ENCODE measurements at regions of chr9 and their contacts with region 1.

Region 1: DNA sequence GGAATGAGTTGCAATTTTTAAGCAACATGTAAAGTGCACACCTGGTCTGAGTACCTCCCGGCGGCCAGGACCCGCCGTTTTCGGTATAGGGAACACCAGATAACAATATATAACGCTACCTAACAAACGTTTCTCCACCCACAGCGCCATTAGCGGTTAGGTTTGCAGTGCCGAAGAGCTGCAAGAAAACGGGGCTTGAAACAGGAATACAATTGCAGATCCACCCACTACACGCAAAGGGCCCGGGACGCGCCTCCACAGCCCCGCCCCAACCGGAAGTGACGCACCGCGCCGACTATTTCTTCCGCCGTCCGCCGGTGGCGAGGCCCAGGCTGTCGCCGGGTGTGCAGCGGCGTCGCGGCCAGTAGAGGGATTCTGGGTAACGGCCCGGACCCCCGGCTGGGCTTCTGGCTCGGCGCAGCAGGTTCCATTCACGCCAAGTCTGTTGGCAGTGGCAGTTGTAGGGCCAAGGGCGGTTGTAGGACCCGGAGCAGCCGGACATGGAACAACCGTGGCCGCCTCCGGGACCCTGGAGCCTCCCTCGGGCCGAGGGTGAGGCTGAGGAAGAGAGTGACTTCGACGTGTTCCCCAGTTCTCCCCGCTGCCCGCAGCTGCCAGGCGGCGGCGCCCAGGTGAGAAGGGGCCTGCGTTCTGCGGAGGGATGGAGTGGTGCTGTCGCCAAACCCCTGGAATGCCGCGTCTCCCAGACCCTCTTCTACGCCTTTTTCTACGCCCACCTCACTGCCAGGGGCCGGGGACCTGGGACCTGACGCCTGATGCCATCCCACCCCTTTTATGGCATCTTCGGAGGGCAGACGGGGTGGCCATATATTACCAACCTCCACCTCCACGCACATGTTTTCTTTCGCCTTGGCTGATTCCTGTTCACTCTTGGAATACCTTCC is at the start of gene CDC37L1:
- DNase-seq: peak; percentile 97 to 100 (median 99)
- ATAC-seq: peak; percentile 82
- H3K4me3 ChIP-seq: peak within 1 kb of the TSS; percentile 95
- H3K4me3 Mint-ChIP-seq: no peak within 1 kb of the TSS
- H3K27ac ChIP-seq: peak within 1 kb of the TSS; percentile 95
- H3K27ac Mint-ChIP-seq: no peak within 1 kb of the TSS
- H3K4me1 ChIP-seq: peaks cover 20% of the 10 kb centered on the region
- H3K4me1 Mint-ChIP-seq: peaks cover 17% of the 10 kb centered on the region
- H3K27me3 ChIP-seq: no peaks in the 10 kb centered on the region
- H3K27me3 Mint-ChIP-seq: no peaks in the 10 kb centered on the region
- CTCF ChIP-seq: peak; percentile 74
- total RNA-seq, gene CDC37L1: 49.1 to 53.4 TPM

Region 2: GRCh38 chr9:4596165-4596922 is 83.2 kb before region 1 on chr9:
- CTCF ChIA-PET with region 1: no interaction called
- POLR2A ChIA-PET with region 1: interaction called, 14 read pairs
- intact Hi-C with region 1: loop called in 1 of 2 experiments (anchors 5 kb)
- DNase-seq: peak; percentile 30 to 86 (median 55)
- ATAC-seq: peak; percentile 91
- H3K4me3 ChIP-seq: no peak overlapping the region
- H3K4me3 Mint-ChIP-seq: peak overlapping the region; percentile 62
- H3K27ac ChIP-seq: peak overlapping the region; percentile 25 to 73
- H3K27ac Mint-ChIP-seq: peak overlapping the region; percentile 94
- H3K4me1 ChIP-seq: peaks cover 39% of the 10 kb centered on the region
- H3K4me1 Mint-ChIP-seq: peaks cover 72% of the 10 kb centered on the region
- H3K27me3 ChIP-seq: no peaks in the 10 kb centered on the region
- H3K27me3 Mint-ChIP-seq: no peaks in the 10 kb centered on the region
- CTCF ChIP-seq: peak; percentile 50

Region 3: GRCh38 chr9:4662108-4662988 is 17.2 kb before region 1 on chr9 and contains the start of gene PLPP6:
- CTCF ChIA-PET with region 1: interaction called, 22 read pairs
- POLR2A ChIA-PET with region 1: interaction called, 95 read pairs
- intact Hi-C with region 1: loop called (anchors 1 kb)
- DNase-seq: peak; percentile 48 to 91 (median 69)
- ATAC-seq: peak; percentile 75
- H3K4me3 ChIP-seq: peak within 1 kb of the TSS; percentile 81
- H3K4me3 Mint-ChIP-seq: peak within 1 kb of the TSS; percentile 97
- H3K27ac ChIP-seq: peak within 1 kb of the TSS; percentile 70 to 72
- H3K27ac Mint-ChIP-seq: peak within 1 kb of the TSS; percentile 88
- H3K4me1 ChIP-seq: peaks cover 45% of the 10 kb centered on the region
- H3K4me1 Mint-ChIP-seq: peaks cover 58% of the 10 kb centered on the region
- H3K27me3 ChIP-seq: no peaks in the 10 kb centered on the region
- H3K27me3 Mint-ChIP-seq: no peaks in the 10 kb centered on the region
- CTCF ChIP-seq: peak; percentile 66
- total RNA-seq, gene PLPP6: 8.9 to 10.5 TPM

Region 4: DNA sequence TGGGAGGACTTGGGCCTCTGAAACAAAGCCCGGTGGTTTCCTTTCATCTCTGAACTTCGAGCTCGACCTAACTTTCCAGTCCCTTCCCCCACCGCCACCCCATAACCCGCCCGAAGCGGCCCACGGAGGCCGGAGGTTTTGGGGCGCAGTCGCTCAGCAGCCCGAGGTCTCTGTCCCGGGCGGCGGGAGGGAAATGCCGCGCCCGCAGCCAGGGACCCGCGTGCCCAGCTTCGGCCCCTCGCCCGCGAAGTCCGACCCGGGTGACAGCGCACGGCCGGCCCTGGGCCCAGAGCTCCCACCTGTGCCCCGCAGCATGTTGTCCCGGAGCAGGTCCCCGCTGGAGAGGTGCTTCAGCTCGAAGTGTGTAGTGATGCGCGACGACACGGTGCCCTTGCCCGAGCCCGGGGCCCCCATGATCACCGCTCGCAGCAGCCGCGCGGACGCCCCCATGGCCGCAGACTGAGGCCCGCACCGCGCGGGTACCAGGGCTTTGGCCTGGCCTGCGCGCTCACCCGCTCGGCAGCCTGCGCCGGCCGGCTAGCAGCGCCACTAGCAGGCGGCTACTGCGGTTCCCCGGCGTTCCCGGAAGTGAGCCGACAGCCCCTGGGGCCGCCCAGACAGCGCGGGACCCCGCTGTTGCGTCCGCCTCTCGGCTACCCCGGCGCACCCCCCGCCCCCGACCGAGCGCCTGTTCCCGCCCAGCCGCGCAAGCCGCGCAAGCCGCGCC is 61.3 kb after region 1 on chr9 and contains the start of gene AK3:
- CTCF ChIA-PET with region 1: interaction called, 4 read pairs
- POLR2A ChIA-PET with region 1: interaction called, 30 read pairs
- intact Hi-C with region 1: loop called (anchors 2 to 5 kb)
- DNase-seq: peak; percentile 61 to 94 (median 80)
- ATAC-seq: peak; percentile 92
- H3K4me3 ChIP-seq: peak within 1 kb of the TSS; percentile 86
- H3K4me3 Mint-ChIP-seq: peak within 1 kb of the TSS; percentile 97
- H3K27ac ChIP-seq: peak within 1 kb of the TSS; percentile 57 to 66
- H3K27ac Mint-ChIP-seq: peak within 1 kb of the TSS; percentile 83
- H3K4me1 ChIP-seq: peaks cover 28% of the 10 kb centered on the region
- H3K4me1 Mint-ChIP-seq: peaks cover 36% of the 10 kb centered on the region
- H3K27me3 ChIP-seq: no peaks in the 10 kb centered on the region
- H3K27me3 Mint-ChIP-seq: no peaks in the 10 kb centered on the region
- CTCF ChIP-seq: no peak
- total RNA-seq, gene AK3: 19.9 to 20.9 TPM

Region 5: DNA sequence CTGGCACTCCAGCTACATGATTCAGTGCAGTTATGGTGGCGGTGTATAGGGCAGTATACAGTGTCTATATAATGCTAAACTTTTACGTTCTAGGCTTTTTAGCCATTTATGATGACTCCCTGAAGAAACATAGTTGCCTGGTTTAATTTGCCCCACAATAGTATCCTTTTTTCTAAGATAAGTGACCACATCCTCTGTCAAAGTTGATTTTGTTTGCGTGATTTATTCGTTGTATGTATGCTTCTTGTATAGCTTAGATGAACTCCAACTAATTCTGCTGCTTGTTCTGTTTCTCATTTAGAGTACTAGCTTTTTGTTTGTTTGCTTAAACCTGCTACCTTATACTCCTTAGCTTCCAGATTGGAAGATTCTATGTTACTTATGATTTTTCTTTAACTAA is 1069.8 kb after region 1 on chr9:
- CTCF ChIA-PET with region 1: no interaction called
- POLR2A ChIA-PET with region 1: no interaction called
- intact Hi-C with region 1: no loop called
- DNase-seq: no peak
- ATAC-seq: no peak
- H3K4me3 ChIP-seq: no peak overlapping the region
- H3K4me3 Mint-ChIP-seq: no peak overlapping the region
- H3K27ac ChIP-seq: no peak overlapping the region
- H3K27ac Mint-ChIP-seq: no peak overlapping the region
- H3K4me1 ChIP-seq: no peaks in the 10 kb centered on the region
- H3K4me1 Mint-ChIP-seq: peaks cover 6% of the 10 kb centered on the region
- H3K27me3 ChIP-seq: no peaks in the 10 kb centered on the region
- H3K27me3 Mint-ChIP-seq: no peaks in the 10 kb centered on the region
- CTCF ChIP-seq: no peak

Region 6: GRCh38 chr9:6008169-6008979 is 1328.9 kb after region 1 on chr9:
- CTCF ChIA-PET with region 1: no interaction called
- POLR2A ChIA-PET with region 1: no interaction called
- intact Hi-C with region 1: loop called in 1 of 2 experiments (anchors 5 kb)
- DNase-seq: peak; percentile 88 to 99 (median 92)
- ATAC-seq: peak; percentile 70
- H3K4me3 ChIP-seq: peak overlapping the region; percentile 87
- H3K4me3 Mint-ChIP-seq: peak overlapping the region; percentile 91
- H3K27ac ChIP-seq: peak overlapping the region; percentile 91 to 95
- H3K27ac Mint-ChIP-seq: peak overlapping the region; percentile 97
- H3K4me1 ChIP-seq: peaks cover 11% of the 10 kb centered on the region
- H3K4me1 Mint-ChIP-seq: peaks cover 70% of the 10 kb centered on the region
- H3K27me3 ChIP-seq: no peaks in the 10 kb centered on the region
- H3K27me3 Mint-ChIP-seq: no peaks in the 10 kb centered on the region
- CTCF ChIP-seq: no peak